Sigmoid colon (tissue), 7 donors: ENCODE measurements at regions of chr1 and their contacts with region 1.

Region 1: GRCh38 chr1:18902523-18903290 is at the start of gene ALDH4A1:
- DNase-seq: peak; percentile 99
- H3K4me3 ChIP-seq: peak within 1 kb of the TSS; percentile 61 to 94 (median 75)
- H3K27ac ChIP-seq: peak within 1 kb of the TSS; percentile 88 to 94 (median 90)
- H3K4me1 ChIP-seq: peaks cover 0 to 30% (median 27%) of the 10 kb centered on the region in 4 donors
- H3K27me3 ChIP-seq: no peaks in the 10 kb centered on the region
- CTCF ChIP-seq: no peak
- EP300 ChIP-seq: no peak
- POLR2A ChIP-seq: no peak
- total RNA-seq, gene ALDH4A1: 6.7 to 12.8 (median 8.4) TPM

Region 2: DNA sequence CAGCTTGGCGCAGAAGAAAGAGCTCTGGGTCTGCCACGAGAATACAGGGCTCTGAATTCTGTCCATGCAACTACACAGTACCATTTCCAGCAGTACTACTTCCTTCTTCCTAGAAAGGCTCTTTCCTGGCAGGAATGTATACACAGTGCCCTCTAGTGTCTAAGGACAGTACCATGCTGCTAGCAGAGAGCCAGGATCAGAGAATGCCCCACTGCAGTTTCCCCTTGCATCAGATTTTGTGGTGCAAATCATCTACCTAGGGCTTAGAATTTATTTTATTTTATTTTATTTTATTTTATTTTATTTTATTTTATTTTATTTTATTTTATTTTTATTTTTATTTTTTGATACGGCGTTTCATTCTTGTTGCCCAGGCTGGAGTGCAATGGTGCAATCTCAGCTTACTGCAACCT is 221.3 kb before region 1 on chr1:
- intact Hi-C with region 1: no loop called
- DNase-seq: no peak
- H3K4me3 ChIP-seq: no peak overlapping the region
- H3K27ac ChIP-seq: no peak overlapping the region
- H3K4me1 ChIP-seq: no peaks in the 10 kb centered on the region
- H3K27me3 ChIP-seq: peaks cover 0 to 70% (median 5%) of the 10 kb centered on the region in 3 donors
- CTCF ChIP-seq: peak in 2 of 4 experiments; percentile 28 to 53
- EP300 ChIP-seq: no peak
- POLR2A ChIP-seq: no peak

Region 3: GRCh38 chr1:18972531-18972930 is 69.8 kb after region 1 on chr1:
- intact Hi-C with region 1: loop called (anchors 2 kb)
- DNase-seq: peak; percentile 55
- H3K4me3 ChIP-seq: no peak overlapping the region
- H3K27ac ChIP-seq: no peak overlapping the region
- H3K4me1 ChIP-seq: peaks cover 0 to 12% (median 5%) of the 10 kb centered on the region in 4 donors
- H3K27me3 ChIP-seq: no peaks in the 10 kb centered on the region
- CTCF ChIP-seq: peak; percentile 39 to 50 (median 44)
- EP300 ChIP-seq: no peak
- POLR2A ChIP-seq: no peak

Region 4: DNA sequence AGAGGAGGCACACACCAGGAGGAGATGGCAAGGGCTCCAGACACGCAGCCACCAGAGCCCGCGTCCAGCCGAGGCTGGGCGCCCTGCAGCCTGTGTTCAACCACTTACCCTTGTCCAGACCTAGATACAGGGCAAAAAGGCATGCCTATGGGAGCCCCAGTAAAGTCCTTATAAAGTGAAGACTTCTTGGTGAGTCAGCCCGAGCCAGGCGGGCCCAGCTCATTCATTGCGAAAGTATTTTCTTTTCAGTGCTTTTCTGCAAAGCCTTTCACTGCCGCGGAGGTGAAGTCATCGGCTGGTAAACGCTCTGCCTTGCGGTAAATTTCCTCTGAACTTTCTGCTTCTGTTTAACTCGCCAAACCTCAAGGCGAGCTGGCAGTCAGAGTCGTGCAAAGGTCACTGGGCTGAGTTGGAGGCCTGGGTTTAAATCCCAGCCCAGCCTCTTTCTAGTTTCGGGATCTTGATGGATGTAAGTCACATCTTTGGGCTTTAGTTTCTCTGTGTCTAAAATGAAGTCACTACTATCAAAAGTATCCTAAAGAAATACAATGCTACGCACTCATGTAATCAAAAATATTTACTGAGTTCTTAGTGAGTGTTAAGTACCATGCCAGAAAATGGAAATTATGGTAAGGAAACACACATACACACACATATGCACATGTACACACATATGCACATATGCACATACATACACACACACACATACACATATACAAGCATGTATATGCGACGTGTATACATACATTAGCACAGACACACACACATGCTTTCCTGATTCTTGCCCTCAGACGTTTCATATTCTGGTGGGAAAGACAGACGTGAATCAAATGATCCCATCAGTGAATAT is 108.5 kb after region 1 on chr1:
- intact Hi-C with region 1: loop called (anchors 5 kb)
- DNase-seq: peak; percentile 91
- H3K4me3 ChIP-seq: peak overlapping the region in 2 of 4 donors; percentile 17 to 20
- H3K27ac ChIP-seq: peak overlapping the region; percentile 76 to 93 (median 82)
- H3K4me1 ChIP-seq: peaks cover 0 to 33% (median 27%) of the 10 kb centered on the region in 4 donors
- H3K27me3 ChIP-seq: no peaks in the 10 kb centered on the region
- CTCF ChIP-seq: no peak
- EP300 ChIP-seq: peak in 1 of 4 donors; percentile 38
- POLR2A ChIP-seq: no peak

Region 5: DNA sequence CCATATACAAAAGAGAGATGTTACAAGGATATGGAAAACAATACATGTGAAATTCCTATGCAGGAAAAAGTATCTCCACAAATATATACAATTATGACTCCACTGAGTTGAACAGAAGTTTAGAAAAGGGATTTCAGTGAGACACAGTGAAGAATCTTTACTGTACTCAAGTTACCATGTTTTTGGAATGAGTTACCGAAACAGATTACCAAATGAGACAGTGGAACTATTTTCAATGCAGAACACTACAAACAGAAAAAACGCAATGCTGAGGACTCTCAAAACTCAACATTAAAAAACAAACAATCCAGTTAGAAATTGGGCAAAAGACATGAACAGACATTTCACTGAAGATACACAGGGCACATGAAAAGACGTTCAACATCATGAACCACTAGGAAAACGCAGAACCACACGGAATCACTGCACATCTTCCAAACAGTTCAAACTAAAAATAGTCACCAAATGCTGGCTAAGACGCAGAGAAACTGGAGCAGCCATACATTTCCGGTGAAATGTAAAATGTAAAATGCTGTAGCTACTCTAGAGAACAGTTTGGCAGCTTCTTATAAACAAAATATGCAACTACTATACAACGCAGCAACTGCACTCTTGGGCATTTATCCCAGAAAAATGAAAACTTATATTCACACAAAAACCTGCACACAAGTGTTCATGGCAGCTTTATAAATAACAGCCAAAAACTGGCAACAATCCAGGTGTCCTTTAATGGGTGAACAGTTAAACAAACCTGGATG is 188.7 kb after region 1 on chr1:
- intact Hi-C with region 1: loop called (anchors 5 kb)
- DNase-seq: no peak
- H3K4me3 ChIP-seq: no peak overlapping the region
- H3K27ac ChIP-seq: peak overlapping the region; percentile 41 to 79 (median 58)
- H3K4me1 ChIP-seq: peaks cover 0 to 37% (median 28%) of the 10 kb centered on the region in 4 donors
- H3K27me3 ChIP-seq: no peaks in the 10 kb centered on the region
- CTCF ChIP-seq: no peak
- EP300 ChIP-seq: no peak
- POLR2A ChIP-seq: no peak

Region 6: GRCh38 chr1:19209990-19210771 is 307.5 kb after region 1 on chr1 and contains the start of gene UBR4:
- intact Hi-C with region 1: loop called (anchors 10 kb)
- DNase-seq: peak; percentile 98
- H3K4me3 ChIP-seq: peak within 1 kb of the TSS; percentile 67 to 94 (median 84)
- H3K27ac ChIP-seq: peak within 1 kb of the TSS; percentile 95 to 98 (median 96)
- H3K4me1 ChIP-seq: peaks cover 0 to 60% (median 50%) of the 10 kb centered on the region in 4 donors
- H3K27me3 ChIP-seq: no peaks in the 10 kb centered on the region
- CTCF ChIP-seq: no peak
- EP300 ChIP-seq: peak in 1 of 4 donors; percentile 89
- POLR2A ChIP-seq: peak; percentile 82 to 93
- total RNA-seq, gene UBR4: 64.3 to 215 (median 85.5) TPM

Region 7: DNA sequence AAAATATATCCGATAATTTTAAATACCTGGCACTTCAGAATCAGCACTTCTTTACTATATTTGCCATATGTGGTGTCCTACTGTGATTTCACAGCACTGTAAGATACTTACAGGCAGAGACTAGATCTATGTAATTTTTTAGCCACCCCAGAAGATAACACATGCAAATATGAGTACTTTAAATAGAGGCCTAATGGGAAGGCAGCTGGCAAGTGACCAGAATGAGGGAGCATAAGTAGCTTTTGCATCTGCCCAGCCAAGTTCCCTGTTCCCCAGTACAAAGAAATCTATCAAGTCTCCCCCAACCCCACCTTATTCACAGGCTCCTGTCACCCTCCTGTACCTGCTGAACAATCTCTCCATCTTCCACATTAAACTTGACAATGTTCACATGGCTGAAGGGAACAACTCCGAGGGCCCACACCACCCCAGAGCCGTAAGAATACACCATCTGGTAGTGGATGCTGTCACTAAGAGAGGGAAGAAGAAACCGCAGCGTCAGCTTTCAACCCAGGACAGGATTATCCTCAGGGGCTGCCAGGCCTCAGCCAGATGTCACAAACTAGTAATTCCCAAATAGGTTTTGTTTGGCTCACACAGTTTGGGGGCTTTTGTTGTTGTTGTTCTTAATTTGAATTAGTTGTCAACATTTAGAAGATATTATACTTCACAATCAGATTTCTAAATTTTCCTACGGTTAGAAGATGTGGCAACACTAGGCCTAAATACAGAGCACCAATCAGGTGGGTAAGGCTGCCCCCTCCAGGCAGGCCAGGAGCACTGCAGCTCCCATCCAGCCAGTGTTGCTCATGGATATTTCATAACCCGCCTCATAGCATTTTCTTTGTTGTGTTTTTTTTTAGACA is 338.2 kb after region 1 on chr1:
- intact Hi-C with region 1: loop called (anchors 10 kb)
- DNase-seq: peak; percentile 86
- H3K4me3 ChIP-seq: no peak overlapping the region
- H3K27ac ChIP-seq: peak overlapping the region; percentile 53 to 62 (median 60)
- H3K4me1 ChIP-seq: peaks cover 0 to 5% (median 2%) of the 10 kb centered on the region in 4 donors
- H3K27me3 ChIP-seq: no peaks in the 10 kb centered on the region
- CTCF ChIP-seq: peak; percentile 83 to 95 (median 91)
- EP300 ChIP-seq: no peak
- POLR2A ChIP-seq: no peak